WTC11 (cell line): ENCODE measurements at regions of chr14 and their contacts with region 1.

Region 1: GRCh38 chr14:87732562-87732961 is 260.4 kb downstream of the GALC start:
- DNase-seq: no peak
- ATAC-seq: no peak
- H3K4me3 Mint-ChIP-seq: no peak overlapping the region
- H3K27ac Mint-ChIP-seq: no peak overlapping the region
- H3K4me1 Mint-ChIP-seq: no peaks in the 10 kb centered on the region
- H3K27me3 Mint-ChIP-seq: no peaks in the 10 kb centered on the region; the same call in 1 of the 2 replicates
- CTCF ChIP-seq: no peak

Region 2: DNA sequence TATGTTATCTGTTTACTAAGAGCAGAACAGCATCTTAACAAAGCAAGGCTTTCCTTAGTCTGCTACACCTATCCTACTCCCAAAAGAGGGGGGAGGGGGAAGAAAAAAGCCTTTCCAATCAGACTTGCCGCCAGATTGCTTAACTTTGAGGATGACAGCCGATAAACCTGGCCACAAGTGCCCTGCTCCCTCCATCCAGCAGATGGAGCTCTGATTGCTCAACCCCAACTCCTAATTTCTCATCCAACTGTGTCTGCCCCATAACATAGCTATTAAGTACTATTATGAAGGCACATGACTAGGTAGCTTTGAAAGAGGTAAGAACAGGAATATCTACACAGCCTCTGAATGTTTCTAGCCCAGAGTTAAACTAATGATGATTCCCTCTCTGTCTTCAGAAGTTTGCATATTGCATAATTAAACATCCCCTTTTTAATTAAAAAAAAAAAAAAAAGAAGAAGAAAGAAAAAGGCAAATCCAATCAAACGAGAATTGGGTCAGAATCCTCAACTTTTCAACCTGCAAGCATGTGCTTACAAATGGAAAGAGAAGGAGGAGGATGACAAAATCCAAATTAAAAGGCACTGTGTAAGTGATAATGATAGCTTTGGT is 13.1 kb after region 1 on chr14:
- CTCF ChIA-PET with region 1: interaction called, 11 read pairs
- POLR2A ChIA-PET with region 1: no interaction called
- DNase-seq: peak; percentile 62
- ATAC-seq: peak; percentile 91
- H3K4me3 Mint-ChIP-seq: no peak overlapping the region
- H3K27ac Mint-ChIP-seq: no peak overlapping the region
- H3K4me1 Mint-ChIP-seq: 0 out of 2 replicates have a peak, but pooled peaks cover 3% of the 10 kb centered on the region
- H3K27me3 Mint-ChIP-seq: no peaks in the 10 kb centered on the region
- CTCF ChIP-seq: peak; percentile 45